Aorta (tissue), 5 donors: ENCODE measurements at regions of chr17 and their contacts with region 1.

Region 1: DNA sequence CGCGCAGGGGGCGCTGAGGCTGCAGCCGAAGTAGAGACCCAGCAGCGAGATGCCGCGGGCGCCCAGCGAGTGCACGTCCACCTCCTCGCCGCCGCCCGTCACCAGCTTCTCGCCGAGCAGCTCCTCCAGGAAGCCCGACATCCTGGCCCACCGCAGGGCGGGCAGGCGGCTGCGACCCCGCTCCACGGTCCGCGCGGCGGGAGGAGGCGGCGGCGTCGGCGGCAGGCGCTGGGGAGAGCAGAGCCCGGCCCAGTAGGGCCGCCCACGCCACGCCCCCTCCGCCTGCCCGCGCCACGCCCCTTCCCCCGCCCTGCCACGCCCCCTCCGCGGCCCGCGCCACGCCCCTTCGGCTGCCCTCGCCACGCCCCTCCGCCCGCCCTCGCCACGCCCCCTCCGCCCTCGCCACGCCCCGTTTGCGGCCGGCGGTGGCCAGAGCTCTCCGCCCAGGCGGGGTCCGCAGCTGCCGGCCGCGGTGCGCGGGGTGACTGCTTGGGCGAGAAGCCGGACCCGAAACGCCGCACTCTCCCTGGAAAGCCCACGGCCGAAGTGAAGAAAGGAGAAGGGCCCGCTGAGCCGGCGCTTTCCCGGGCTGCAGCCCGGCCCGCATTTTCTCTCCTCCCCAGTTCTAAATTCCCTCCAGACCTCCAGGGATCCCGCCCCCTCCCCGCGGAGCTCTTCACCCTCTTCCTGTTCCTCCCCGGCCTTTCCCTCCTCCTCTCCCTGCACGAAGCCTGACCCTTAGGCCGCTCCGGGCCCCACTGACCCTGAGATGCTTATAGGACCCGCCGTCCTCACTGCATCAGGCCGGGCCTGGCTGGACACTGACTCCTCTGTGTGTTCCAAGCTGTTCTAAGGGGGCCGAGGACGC is at the start of gene NXN:
- DNase-seq: peak; percentile 90 to 97
- ATAC-seq: peak; percentile 95
- H3K4me3 ChIP-seq: peak within 1 kb of the TSS; percentile 49 to 64
- H3K27ac ChIP-seq: peak within 1 kb of the TSS in 1 of 2 donors; percentile 4
- H3K4me1 ChIP-seq: no peaks in the 10 kb centered on the region
- H3K27me3 ChIP-seq: no peaks in the 10 kb centered on the region
- total RNA-seq, gene NXN: 23.4 to 41.0 TPM

Region 2: GRCh38 chr17:409848-410545 is 569.8 kb before region 1 on chr17:
- intact Hi-C with region 1: loop called in 1 of 2 experiments (anchors 5 kb)
- DNase-seq: peak; percentile 100
- ATAC-seq: peak; percentile 97
- H3K4me3 ChIP-seq: peak overlapping the region; percentile 48 to 50
- H3K27ac ChIP-seq: no peak overlapping the region
- H3K4me1 ChIP-seq: no peaks in the 10 kb centered on the region
- H3K27me3 ChIP-seq: no peaks in the 10 kb centered on the region

Region 3: DNA sequence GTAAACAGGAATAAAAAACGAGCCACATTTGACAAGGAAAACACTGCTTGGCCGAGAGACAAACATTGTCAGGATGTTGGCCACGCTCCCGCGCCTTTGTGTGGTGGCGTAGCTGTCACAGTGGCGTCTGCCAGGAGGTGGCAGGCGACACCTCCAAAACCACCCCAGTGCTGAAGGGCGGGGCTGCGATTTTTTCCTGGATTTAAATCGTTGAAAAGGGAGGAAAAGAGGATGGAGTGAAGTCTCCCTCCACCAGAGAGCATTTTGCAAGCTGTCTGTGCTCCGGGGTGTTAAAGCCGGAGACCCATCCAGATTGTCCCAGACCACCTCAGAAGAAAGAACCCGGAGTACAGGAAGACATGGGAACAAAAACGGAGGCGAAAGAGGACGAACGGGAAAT is 184.9 kb before region 1 on chr17:
- intact Hi-C with region 1: loop called (anchors 1 kb)
- DNase-seq: peak; percentile 88 to 94
- ATAC-seq: peak; percentile 90
- H3K4me3 ChIP-seq: peak overlapping the region; percentile 5 to 8
- H3K27ac ChIP-seq: no peak overlapping the region
- H3K4me1 ChIP-seq: no peaks in the 10 kb centered on the region
- H3K27me3 ChIP-seq: no peaks in the 10 kb centered on the region

Region 4: GRCh38 chr17:879549-880442 is 100.0 kb before region 1 on chr17:
- intact Hi-C with region 1: loop called (anchors 10 kb)
- DNase-seq: peak; percentile 76 to 89
- ATAC-seq: peak; percentile 49
- H3K4me3 ChIP-seq: no peak overlapping the region
- H3K27ac ChIP-seq: peak overlapping the region in 1 of 2 donors; percentile 38
- H3K4me1 ChIP-seq: peaks cover 0 to 5% of the 10 kb centered on the region in 2 donors
- H3K27me3 ChIP-seq: no peaks in the 10 kb centered on the region